WTC11 (cell line): ENCODE measurements at regions of chr16 and their contacts with region 1.

Region 1: DNA sequence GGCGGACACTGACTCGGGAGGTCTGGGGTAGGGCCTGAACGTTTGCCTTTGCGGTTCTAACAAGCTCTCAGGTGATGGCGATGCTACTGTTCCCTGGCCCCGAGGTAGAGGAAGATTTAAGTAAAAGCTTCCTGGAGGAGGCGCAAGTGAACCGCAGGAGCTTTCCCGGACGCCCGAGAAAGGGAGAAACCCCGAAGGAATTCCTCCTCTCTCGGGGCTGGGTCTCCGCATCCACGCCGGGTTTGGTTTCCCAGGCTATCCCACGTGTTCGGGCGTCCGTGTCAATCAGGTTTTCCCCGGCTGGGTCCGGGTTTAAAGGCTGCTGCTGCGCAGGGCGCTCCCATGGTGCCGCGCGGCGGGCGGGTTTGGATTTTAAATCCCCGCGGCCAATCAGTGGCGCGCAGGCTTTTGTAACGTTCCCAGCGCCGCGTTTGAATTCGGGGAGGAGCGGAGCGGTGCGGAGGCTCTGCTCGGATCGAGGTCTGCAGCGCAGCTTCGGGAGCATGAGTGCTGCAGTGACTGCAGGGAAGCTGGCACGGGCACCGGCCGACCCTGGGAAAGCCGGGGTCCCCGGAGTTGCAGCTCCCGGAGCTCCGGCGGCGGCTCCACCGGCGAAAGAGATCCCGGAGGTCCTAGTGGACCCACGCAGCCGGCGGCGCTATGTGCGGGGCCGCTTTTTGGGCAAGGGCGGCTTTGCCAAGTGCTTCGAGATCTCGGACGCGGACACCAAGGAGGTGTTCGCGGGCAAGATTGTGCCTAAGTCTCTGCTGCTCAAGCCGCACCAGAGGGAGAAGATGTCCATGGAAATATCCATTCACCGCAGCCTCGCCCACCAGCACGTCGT is at the start of gene PLK1:
- DNase-seq: peak; percentile 89
- ATAC-seq: peak; percentile 92
- H3K4me3 Mint-ChIP-seq: peak within 1 kb of the TSS; percentile 97
- H3K27ac Mint-ChIP-seq: peak within 1 kb of the TSS; percentile 84
- H3K4me1 Mint-ChIP-seq: peaks cover 20% of the 10 kb centered on the region
- H3K27me3 Mint-ChIP-seq: no peaks in the 10 kb centered on the region
- CTCF ChIP-seq: no peak
- total RNA-seq, gene PLK1: 145 to 167 TPM (median 147 TPM) in 3 replicates

Region 2: DNA sequence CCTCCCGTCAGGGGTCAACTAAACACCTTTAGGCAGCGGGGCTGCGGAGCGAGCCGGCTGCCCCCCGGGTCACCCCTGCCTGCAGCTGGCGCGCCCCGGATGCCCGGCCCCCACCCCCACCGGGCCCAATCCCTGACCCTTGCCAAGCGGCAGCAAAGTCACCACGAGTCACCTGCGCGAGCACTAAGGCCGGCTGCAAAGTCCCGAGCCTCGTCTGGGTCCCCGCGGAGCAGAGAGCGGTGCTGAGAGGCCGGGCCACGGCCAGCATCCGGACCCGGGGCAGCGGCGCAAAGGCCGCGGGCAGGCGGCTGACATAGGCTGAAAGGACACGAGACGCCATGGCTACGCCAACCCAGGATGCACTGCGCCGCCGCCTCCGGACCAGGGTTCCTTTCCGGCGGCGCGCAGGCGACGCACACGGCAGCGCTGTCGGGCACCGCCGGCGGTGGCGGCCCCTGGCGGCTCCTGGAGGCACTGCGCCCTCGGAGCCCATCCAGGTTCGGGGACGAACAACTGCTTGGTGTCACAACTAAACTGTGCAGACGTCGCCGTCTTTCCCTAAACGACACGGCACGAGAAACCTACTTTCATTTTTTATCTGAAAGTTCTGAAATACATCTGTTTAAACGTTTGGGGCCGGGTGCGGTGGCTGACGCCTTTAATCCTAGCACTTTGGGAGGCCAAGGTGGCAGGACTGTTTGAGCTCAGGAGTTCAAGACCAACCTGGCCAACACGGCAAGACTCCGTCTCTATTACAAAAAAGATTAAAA is 82.5 kb before region 1 on chr16 and contains the start of gene NDUFAB1:
- CTCF ChIA-PET with region 1: interaction called, 16 read pairs
- POLR2A ChIA-PET with region 1: no interaction called
- DNase-seq: peak; percentile 90
- ATAC-seq: peak; percentile 88
- H3K4me3 Mint-ChIP-seq: peak within 1 kb of the TSS; percentile 84
- H3K27ac Mint-ChIP-seq: peak within 1 kb of the TSS; percentile 91
- H3K4me1 Mint-ChIP-seq: peaks cover 29% of the 10 kb centered on the region
- H3K27me3 Mint-ChIP-seq: no peaks in the 10 kb centered on the region
- CTCF ChIP-seq: peak; percentile 97
- total RNA-seq, gene NDUFAB1: 146 to 189 TPM (median 156 TPM) in 3 replicates

Region 3: DNA sequence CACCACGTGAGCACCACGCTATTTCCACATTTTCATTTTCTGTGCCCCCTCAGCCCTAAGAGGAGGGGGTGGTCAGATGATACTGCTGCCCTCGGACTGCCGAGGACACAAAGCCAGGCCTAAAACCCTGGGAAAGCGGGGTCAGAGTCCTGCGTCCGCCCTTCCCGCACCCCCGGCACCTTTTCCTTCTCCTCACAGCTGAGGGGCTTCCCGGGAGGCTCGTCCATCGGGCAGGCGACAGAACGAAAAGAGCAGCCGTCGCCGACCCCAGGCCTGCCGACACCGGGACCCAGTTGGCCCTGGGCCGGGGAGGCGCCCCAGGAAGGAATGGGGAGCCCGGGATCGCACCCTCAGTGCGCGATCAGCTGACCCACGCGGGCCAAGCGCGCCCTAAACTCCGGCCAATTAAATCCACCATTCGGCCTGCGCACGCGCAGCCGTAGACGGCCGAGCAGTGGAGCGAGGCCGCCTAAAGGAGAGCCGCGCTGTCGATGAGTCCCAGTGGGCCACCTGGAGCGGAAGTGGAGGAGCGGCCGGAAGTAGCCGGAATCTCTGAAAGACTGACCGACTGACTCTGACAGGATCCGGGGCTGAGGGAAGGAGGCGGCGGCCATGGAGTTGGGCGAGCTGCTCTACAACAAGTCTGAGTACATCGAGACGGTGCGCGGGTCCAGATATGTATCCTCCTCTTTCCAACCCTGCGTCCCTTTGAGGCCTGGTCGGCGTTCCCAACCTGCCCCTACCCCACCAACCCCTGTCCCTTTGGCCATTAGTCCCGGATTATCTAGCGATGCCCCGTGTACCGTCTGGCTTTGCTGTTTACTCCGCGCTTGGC is 37.5 kb before region 1 on chr16 and contains the starts of genes DCTN5 and PALB2:
- CTCF ChIA-PET with region 1: interaction called, 6 read pairs
- POLR2A ChIA-PET with region 1: interaction called, 10 read pairs
- DNase-seq: peak; percentile 91
- ATAC-seq: peak; percentile 93
- H3K4me3 Mint-ChIP-seq: peak within 1 kb of the TSS; percentile 98
- H3K27ac Mint-ChIP-seq: peak within 1 kb of the TSS; percentile 97
- H3K4me1 Mint-ChIP-seq: peaks cover 13% of the 10 kb centered on the region
- H3K27me3 Mint-ChIP-seq: no peaks in the 10 kb centered on the region; the same call in 1 of the 2 replicates
- CTCF ChIP-seq: no peak
- total RNA-seq, gene DCTN5: 54.0 to 65.8 TPM (median 60.0 TPM) in 3 replicates
- total RNA-seq, gene PALB2: 23.8 to 32.1 TPM (median 25.1 TPM) in 3 replicates

Region 4: GRCh38 chr16:23694644-23695373 is 16.2 kb after region 1 on chr16:
- CTCF ChIA-PET with region 1: interaction called, 7 read pairs
- POLR2A ChIA-PET with region 1: interaction called, 30 read pairs
- DNase-seq: peak; percentile 85
- ATAC-seq: peak; percentile 88
- H3K4me3 Mint-ChIP-seq: peak overlapping the region; percentile 79
- H3K27ac Mint-ChIP-seq: peak overlapping the region; percentile 69
- H3K4me1 Mint-ChIP-seq: peaks cover 12% of the 10 kb centered on the region
- H3K27me3 Mint-ChIP-seq: no peaks in the 10 kb centered on the region
- CTCF ChIP-seq: no peak

Region 5: GRCh38 chr16:23728112-23728477 is 49.4 kb after region 1 on chr16:
- CTCF ChIA-PET with region 1: interaction called, 23 read pairs
- POLR2A ChIA-PET with region 1: interaction called, 3 read pairs
- DNase-seq: no peak
- ATAC-seq: peak; percentile 7; the same call in 1 of the 2 replicates
- H3K4me3 Mint-ChIP-seq: no peak overlapping the region
- H3K27ac Mint-ChIP-seq: no peak overlapping the region
- H3K4me1 Mint-ChIP-seq: peaks cover 14% of the 10 kb centered on the region
- H3K27me3 Mint-ChIP-seq: peaks cover 3% of the 10 kb centered on the region; the same call in 1 of the 2 replicates
- CTCF ChIP-seq: no peak

Region 6: DNA sequence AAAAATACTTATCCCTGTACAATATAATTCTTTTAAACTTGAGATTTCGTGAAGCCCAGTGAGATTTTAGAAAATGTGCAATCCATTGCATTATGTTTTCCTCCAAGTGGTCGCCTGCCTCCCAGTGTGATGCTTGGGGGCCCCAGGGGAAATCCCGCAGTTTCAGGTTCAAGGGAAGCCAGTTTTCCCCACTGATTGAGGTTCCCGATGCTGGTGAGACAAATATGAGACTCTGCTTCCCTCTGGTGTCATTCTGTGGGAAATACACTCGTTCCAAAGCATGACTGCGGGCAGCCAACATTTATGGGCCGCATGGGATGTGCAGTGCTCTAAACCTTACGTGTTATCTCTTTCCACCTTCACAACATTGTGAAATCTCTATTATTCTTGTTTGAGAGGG is 358.0 kb after region 1 on chr16:
- CTCF ChIA-PET with region 1: interaction called, 12 read pairs
- POLR2A ChIA-PET with region 1: no interaction called
- DNase-seq: peak; percentile 59
- ATAC-seq: peak; percentile 87
- H3K4me3 Mint-ChIP-seq: no peak overlapping the region
- H3K27ac Mint-ChIP-seq: no peak overlapping the region
- H3K4me1 Mint-ChIP-seq: peaks cover 2% of the 10 kb centered on the region; the same call in 1 of the 2 replicates
- H3K27me3 Mint-ChIP-seq: no peaks in the 10 kb centered on the region
- CTCF ChIP-seq: peak; percentile 67